ENCODE measurements at regions of chr12 and their contacts with region 1.

Region 1: GRCh38 chr12:111812881-111813741 is 28.9 kb upstream of the MAPKAPK5 start:
- DNase-seq: peak; percentile 79
- H3K4me3 Mint-ChIP-seq: no peak overlapping the region
- H3K27ac Mint-ChIP-seq: no peak overlapping the region
- H3K4me1 Mint-ChIP-seq: peaks cover 7% of the 10 kb centered on the region
- H3K27me3 Mint-ChIP-seq: no peaks in the 10 kb centered on the region

Region 2: DNA sequence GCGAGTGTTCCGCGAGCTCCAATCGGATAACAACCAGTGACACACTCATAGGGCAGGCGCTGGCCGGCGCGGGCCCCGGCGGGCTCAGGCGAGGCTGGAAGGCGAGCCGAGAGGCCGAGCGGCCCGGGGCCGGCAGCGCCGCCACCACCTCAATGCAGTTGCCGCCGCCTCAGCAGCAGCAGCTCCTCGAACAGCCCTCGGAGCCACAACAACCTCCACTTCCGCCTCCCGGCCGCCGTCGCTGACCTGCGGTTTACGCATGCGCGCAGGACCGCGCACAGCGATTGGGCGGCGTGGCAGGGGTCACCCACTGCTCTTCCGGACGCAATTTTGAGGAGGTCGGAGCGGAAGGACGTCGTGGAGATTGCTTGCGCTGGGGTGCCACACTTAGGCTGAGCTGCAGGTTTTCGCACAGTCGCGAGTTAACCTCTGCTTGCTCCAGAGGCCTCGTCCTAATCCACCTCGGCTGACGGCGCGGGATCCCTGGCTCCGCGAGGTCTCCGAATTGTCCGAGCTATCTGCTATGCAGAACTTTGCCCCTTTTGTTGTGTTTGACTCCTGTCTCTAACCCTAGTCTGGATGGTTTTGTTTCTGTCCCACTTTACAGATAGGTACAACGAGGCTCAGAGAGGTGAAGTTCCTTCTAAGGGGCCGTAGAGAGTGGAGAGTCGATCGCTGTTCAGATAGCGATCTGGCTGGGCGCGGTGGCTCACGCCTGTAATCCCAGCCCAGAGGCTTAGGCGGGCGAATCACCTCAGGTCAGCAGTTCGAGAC is 127.2 kb before region 1 on chr12 and contains the starts of genes ACAD10 and BRAP:
- CTCF ChIA-PET with region 1: interaction called, 9 read pairs
- POLR2A ChIA-PET with region 1: no interaction called
- intact Hi-C with region 1: loop called (anchors 5 kb)
- DNase-seq: peak; percentile 97
- H3K4me3 Mint-ChIP-seq: peak within 1 kb of the TSS; percentile 95
- H3K27ac Mint-ChIP-seq: peak within 1 kb of the TSS; percentile 89
- H3K4me1 Mint-ChIP-seq: peaks cover 32% of the 10 kb centered on the region
- H3K27me3 Mint-ChIP-seq: peaks cover 2% of the 10 kb centered on the region
- total RNA-seq, gene ACAD10: 22.5 to 24.2 TPM
- total RNA-seq, gene BRAP: 16.8 to 18.0 TPM

Region 3: GRCh38 chr12:111753144-111753881 is 59.8 kb before region 1 on chr12:
- CTCF ChIA-PET with region 1: interaction called, 33 read pairs
- POLR2A ChIA-PET with region 1: interaction called, 3 read pairs
- intact Hi-C with region 1: no loop called
- DNase-seq: no peak
- H3K4me3 Mint-ChIP-seq: no peak overlapping the region
- H3K27ac Mint-ChIP-seq: no peak overlapping the region
- H3K4me1 Mint-ChIP-seq: no peaks in the 10 kb centered on the region
- H3K27me3 Mint-ChIP-seq: no peaks in the 10 kb centered on the region

Region 4: DNA sequence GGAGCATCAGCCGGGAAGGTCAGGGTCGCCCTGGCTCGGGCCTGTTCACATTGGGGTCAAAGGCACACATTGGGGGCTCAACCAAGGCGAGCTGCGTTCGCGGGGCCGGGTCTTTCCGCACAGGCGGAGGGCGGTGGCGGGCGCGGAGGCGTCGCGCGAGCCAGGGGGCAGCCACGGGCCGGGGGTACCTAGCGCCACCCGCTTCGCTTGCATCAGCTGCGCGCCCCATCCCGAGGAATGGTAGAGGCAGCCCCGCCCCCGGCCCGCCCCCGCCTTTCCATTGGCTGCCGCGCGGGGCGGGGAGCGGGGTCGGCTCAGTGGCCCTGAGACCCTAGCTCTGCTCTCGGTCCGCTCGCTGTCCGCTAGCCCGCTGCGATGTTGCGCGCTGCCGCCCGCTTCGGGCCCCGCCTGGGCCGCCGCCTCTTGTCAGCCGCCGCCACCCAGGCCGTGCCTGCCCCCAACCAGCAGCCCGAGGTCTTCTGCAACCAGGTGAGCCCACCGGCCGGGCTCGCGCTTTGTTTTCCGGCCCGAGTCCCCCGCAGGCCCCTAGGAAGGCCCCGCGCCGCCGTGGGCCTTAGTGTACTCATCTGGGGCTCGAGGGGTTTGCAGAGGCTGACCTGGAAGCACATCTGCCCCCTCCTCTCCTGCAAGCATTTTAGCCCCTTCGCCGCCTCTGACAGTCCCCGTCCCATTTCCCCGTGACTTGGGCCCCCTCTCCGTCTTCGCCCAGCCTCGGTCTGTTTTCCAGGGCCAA is 46.3 kb before region 1 on chr12 and contains the start of gene ALDH2:
- CTCF ChIA-PET with region 1: interaction called, 7 read pairs
- POLR2A ChIA-PET with region 1: interaction called, 3 read pairs
- intact Hi-C with region 1: loop called (anchors 5 kb)
- DNase-seq: peak; percentile 36
- H3K4me3 Mint-ChIP-seq: peak within 1 kb of the TSS; percentile 56
- H3K27ac Mint-ChIP-seq: no peak within 1 kb of the TSS
- H3K4me1 Mint-ChIP-seq: peaks cover 12% of the 10 kb centered on the region
- H3K27me3 Mint-ChIP-seq: peaks cover 43% of the 10 kb centered on the region
- total RNA-seq, gene ALDH2: 1.9 to 3.1 TPM

Region 5: DNA sequence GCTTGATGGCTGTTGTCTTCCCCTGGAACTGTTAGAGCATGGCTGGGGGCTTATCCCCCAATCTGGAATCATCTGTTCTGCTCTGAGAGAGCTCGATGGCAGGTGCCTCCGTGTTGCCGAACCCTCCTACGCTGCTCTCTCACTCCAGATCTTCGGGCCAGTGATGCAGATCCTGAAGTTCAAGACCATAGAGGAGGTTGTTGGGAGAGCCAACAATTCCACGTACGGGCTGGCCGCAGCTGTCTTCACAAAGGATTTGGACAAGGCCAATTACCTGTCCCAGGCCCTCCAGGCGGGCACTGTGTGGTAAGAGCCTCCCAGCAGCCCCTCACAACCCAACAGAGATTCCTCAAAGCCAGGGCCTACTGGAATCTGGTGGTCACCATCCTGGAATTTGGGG is 13.4 kb before region 1 on chr12:
- CTCF ChIA-PET with region 1: interaction called, 10 read pairs
- POLR2A ChIA-PET with region 1: no interaction called
- intact Hi-C with region 1: no loop called
- DNase-seq: no peak
- H3K4me3 Mint-ChIP-seq: no peak overlapping the region
- H3K27ac Mint-ChIP-seq: no peak overlapping the region
- H3K4me1 Mint-ChIP-seq: no peaks in the 10 kb centered on the region
- H3K27me3 Mint-ChIP-seq: no peaks in the 10 kb centered on the region

Region 6: GRCh38 chr12:111826316-111826715 is 13.2 kb after region 1 on chr12:
- CTCF ChIA-PET with region 1: interaction called, 13 read pairs
- POLR2A ChIA-PET with region 1: no interaction called
- intact Hi-C with region 1: no loop called
- DNase-seq: no peak
- H3K4me3 Mint-ChIP-seq: no peak overlapping the region
- H3K27ac Mint-ChIP-seq: no peak overlapping the region
- H3K4me1 Mint-ChIP-seq: no peaks in the 10 kb centered on the region
- H3K27me3 Mint-ChIP-seq: peaks cover 6% of the 10 kb centered on the region

Region 7: GRCh38 chr12:111868676-111869588 is 55.8 kb after region 1 on chr12:
- CTCF ChIA-PET with region 1: no interaction called
- POLR2A ChIA-PET with region 1: no interaction called
- intact Hi-C with region 1: no loop called
- DNase-seq: no peak
- H3K4me3 Mint-ChIP-seq: no peak overlapping the region
- H3K27ac Mint-ChIP-seq: no peak overlapping the region
- H3K4me1 Mint-ChIP-seq: no peaks in the 10 kb centered on the region
- H3K27me3 Mint-ChIP-seq: no peaks in the 10 kb centered on the region